K562 (cell line): ENCODE measurements at regions of chr16 and their contacts with region 1.

Region 1: GRCh38 chr16:83826146-83826913 is 18.6 kb downstream of the HSBP1 start:
- DNase-seq: peak; percentile 85 to 91 (median 89)
- ATAC-seq: peak; percentile 96
- H3K4me3 ChIP-seq: no peak overlapping the region
- H3K27ac ChIP-seq: no peak overlapping the region
- H3K4me1 ChIP-seq: peaks cover 0 to 7% of the 10 kb centered on the region in 2 experiments; a peak in 3 of 5 replicates
- H3K27me3 ChIP-seq: peaks cover 32 to 63% of the 10 kb centered on the region in 2 experiments
- CTCF ChIP-seq: peak; percentile 92 to 98 (median 95)
- EP300 ChIP-seq: no peak; the same call in 1 of the 2 replicates
- POLR2A ChIP-seq: no peak
- RAD21 ChIP-seq: peak; percentile 88 to 98

Region 2: GRCh38 chr16:83813823-83814658 is 12.3 kb before region 1 on chr16:
- CTCF ChIA-PET with region 1: no interaction called
- POLR2A ChIA-PET with region 1: interaction called, 14 read pairs
- in situ Hi-C with region 1: no loop called
- intact Hi-C with region 1: no loop called
- DNase-seq: no peak
- ATAC-seq: peak; percentile 57
- H3K4me3 ChIP-seq: no peak overlapping the region
- H3K27ac ChIP-seq: no peak overlapping the region
- H3K4me1 ChIP-seq: peaks cover 0 to 2% of the 10 kb centered on the region in 2 experiments; a peak in 3 of 5 replicates
- H3K27me3 ChIP-seq: peaks cover 33 to 37% of the 10 kb centered on the region in 2 experiments
- CTCF ChIP-seq: no peak
- EP300 ChIP-seq: no peak
- POLR2A ChIP-seq: no peak
- RAD21 ChIP-seq: no peak

Region 3: GRCh38 chr16:83878838-83879237 is 52.5 kb after region 1 on chr16:
- CTCF ChIA-PET with region 1: interaction called, 29 read pairs
- POLR2A ChIA-PET with region 1: interaction called, 3 read pairs
- in situ Hi-C with region 1: no loop called
- intact Hi-C with region 1: loop called (anchors 1 kb)
- DNase-seq: peak in 1 of 4 experiments; percentile 43
- ATAC-seq: peak; percentile 48; the same call in 2 of the 3 replicates
- H3K4me3 ChIP-seq: no peak overlapping the region
- H3K27ac ChIP-seq: no peak overlapping the region
- H3K4me1 ChIP-seq: no peaks in the 10 kb centered on the region
- H3K27me3 ChIP-seq: peaks cover 44 to 78% of the 10 kb centered on the region in 2 experiments
- CTCF ChIP-seq: peak; percentile 47 to 83 (median 55); a peak in 5 of 6 replicates
- EP300 ChIP-seq: no peak
- POLR2A ChIP-seq: no peak
- RAD21 ChIP-seq: peak; percentile 68 to 89

Region 4: DNA sequence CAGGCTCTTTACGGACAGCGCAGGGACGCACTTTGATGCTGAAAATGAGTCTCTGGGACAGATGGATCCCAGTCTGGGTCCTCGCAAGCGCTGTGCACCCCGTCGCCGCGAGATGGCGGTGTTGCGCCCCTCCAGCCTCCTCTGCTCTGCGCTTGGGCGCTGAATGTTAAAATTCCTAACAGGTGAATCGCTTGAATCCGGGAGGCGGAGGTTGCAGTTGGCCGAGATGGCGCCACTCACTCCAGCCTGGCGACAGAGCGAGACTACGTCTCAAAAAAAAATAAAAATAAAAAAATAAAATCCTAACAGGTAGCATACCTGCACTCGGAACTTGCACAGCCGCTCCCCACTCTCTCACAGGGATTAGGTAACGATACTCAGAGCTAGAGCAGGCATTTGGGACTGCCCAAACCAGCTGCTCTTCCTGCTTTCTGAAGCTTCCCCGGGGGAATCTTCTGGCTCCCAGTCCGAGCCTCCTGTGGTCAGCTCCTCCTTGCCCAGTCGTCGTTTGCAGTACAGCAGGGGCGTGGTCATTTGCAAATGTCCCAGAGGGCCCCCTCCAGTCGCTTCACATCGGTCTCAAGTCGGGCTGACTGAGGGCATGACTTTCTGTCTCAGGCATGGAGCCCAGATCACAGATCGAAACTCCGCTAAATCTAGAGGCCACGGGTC is 100.5 kb after region 1 on chr16:
- CTCF ChIA-PET with region 1: interaction called, 5 read pairs
- POLR2A ChIA-PET with region 1: no interaction called
- in situ Hi-C with region 1: no loop called
- intact Hi-C with region 1: loop called (anchors 10 kb)
- DNase-seq: peak; percentile 82 to 91 (median 88)
- ATAC-seq: peak; percentile 94
- H3K4me3 ChIP-seq: no peak overlapping the region
- H3K27ac ChIP-seq: no peak overlapping the region
- H3K4me1 ChIP-seq: peaks cover 0 to 31% of the 10 kb centered on the region in 2 experiments; a peak in 2 of 5 replicates
- H3K27me3 ChIP-seq: peaks cover 53 to 93% of the 10 kb centered on the region in 2 experiments
- CTCF ChIP-seq: peak; percentile 93 to 96 (median 95)
- EP300 ChIP-seq: no peak
- POLR2A ChIP-seq: no peak
- RAD21 ChIP-seq: peak; percentile 53 to 80

Region 5: DNA sequence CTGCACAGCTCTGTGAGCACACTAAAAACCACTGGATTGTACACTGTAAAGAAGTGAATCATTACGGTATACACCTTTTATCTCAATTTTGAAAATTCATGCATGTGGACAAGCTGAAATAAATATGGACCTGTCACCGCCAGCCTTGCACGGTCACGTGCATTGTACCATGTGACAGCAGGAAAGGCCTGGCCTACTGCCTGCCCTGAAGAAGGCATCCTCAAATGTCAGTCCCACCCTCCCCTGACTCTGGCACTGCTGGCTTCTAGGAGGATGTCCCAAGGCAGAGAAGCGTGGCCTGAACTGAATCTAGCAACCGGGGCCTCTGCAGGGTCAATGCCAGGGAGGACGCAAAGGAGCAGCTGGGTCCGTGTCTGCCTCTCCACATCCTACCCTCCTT is 181.6 kb after region 1 on chr16:
- CTCF ChIA-PET with region 1: no interaction called
- POLR2A ChIA-PET with region 1: no interaction called
- in situ Hi-C with region 1: no loop called
- intact Hi-C with region 1: no loop called
- DNase-seq: no peak
- ATAC-seq: peak; percentile 13
- H3K4me3 ChIP-seq: no peak overlapping the region
- H3K27ac ChIP-seq: no peak overlapping the region
- H3K4me1 ChIP-seq: peaks cover 2 to 4% of the 10 kb centered on the region in 2 experiments; a peak in 4 of 5 replicates
- H3K27me3 ChIP-seq: peaks cover 22 to 43% of the 10 kb centered on the region in 2 experiments
- CTCF ChIP-seq: no peak
- EP300 ChIP-seq: no peak
- POLR2A ChIP-seq: no peak
- RAD21 ChIP-seq: no peak

Region 6: GRCh38 chr16:84062734-84063640 is 236.7 kb after region 1 on chr16:
- CTCF ChIA-PET with region 1: interaction called, 8 read pairs
- POLR2A ChIA-PET with region 1: no interaction called
- in situ Hi-C with region 1: loop called (anchors 10 kb)
- intact Hi-C with region 1: loop called (anchors 1 kb)
- DNase-seq: peak; percentile 85 to 90 (median 86)
- ATAC-seq: peak; percentile 99
- H3K4me3 ChIP-seq: no peak overlapping the region
- H3K27ac ChIP-seq: no peak overlapping the region
- H3K4me1 ChIP-seq: peaks cover 0 to 6% of the 10 kb centered on the region in 2 experiments; a peak in 1 of 5 replicates
- H3K27me3 ChIP-seq: no peaks in the 10 kb centered on the region
- CTCF ChIP-seq: peak; percentile 85 to 99 (median 92)
- EP300 ChIP-seq: no peak
- POLR2A ChIP-seq: no peak
- RAD21 ChIP-seq: peak; percentile 64 to 84

Region 7: GRCh38 chr16:84303023-84303422 is 476.7 kb after region 1 on chr16:
- CTCF ChIA-PET with region 1: no interaction called
- POLR2A ChIA-PET with region 1: no interaction called
- in situ Hi-C with region 1: no loop called
- intact Hi-C with region 1: no loop called
- DNase-seq: no peak
- ATAC-seq: no peak
- H3K4me3 ChIP-seq: no peak overlapping the region
- H3K27ac ChIP-seq: no peak overlapping the region
- H3K4me1 ChIP-seq: peaks cover 0 to 2% of the 10 kb centered on the region in 2 experiments; a peak in 1 of 5 replicates
- H3K27me3 ChIP-seq: peaks cover 60 to 83% of the 10 kb centered on the region in 2 experiments
- CTCF ChIP-seq: no peak
- EP300 ChIP-seq: no peak
- POLR2A ChIP-seq: no peak
- RAD21 ChIP-seq: no peak

Region 8: GRCh38 chr16:84478172-84478947 is 652.0 kb after region 1 on chr16:
- CTCF ChIA-PET with region 1: no interaction called
- POLR2A ChIA-PET with region 1: no interaction called
- in situ Hi-C with region 1: no loop called
- intact Hi-C with region 1: loop called (anchors 5 kb)
- DNase-seq: peak in 1 of 4 experiments; percentile 18
- ATAC-seq: peak; percentile 51
- H3K4me3 ChIP-seq: no peak overlapping the region
- H3K27ac ChIP-seq: no peak overlapping the region
- H3K4me1 ChIP-seq: peaks cover 0 to 13% of the 10 kb centered on the region in 2 experiments; a peak in 2 of 5 replicates
- H3K27me3 ChIP-seq: peaks cover 0 to 7% of the 10 kb centered on the region in 2 experiments; a peak in 3 of 5 replicates
- CTCF ChIP-seq: no peak
- EP300 ChIP-seq: no peak
- POLR2A ChIP-seq: no peak
- RAD21 ChIP-seq: no peak